ENCODE measurements at regions of chr12 and their contacts with region 1.

Region 1: GRCh38 chr12:50174971-50175715 is 8.0 kb upstream of the CERS5 start:
- DNase-seq: no peak
- ATAC-seq: no peak
- H3K4me3 Mint-ChIP-seq: no peak overlapping the region
- H3K27ac Mint-ChIP-seq: no peak overlapping the region
- H3K4me1 Mint-ChIP-seq: no peaks in the 10 kb centered on the region
- H3K27me3 Mint-ChIP-seq: no peaks in the 10 kb centered on the region

Region 2: DNA sequence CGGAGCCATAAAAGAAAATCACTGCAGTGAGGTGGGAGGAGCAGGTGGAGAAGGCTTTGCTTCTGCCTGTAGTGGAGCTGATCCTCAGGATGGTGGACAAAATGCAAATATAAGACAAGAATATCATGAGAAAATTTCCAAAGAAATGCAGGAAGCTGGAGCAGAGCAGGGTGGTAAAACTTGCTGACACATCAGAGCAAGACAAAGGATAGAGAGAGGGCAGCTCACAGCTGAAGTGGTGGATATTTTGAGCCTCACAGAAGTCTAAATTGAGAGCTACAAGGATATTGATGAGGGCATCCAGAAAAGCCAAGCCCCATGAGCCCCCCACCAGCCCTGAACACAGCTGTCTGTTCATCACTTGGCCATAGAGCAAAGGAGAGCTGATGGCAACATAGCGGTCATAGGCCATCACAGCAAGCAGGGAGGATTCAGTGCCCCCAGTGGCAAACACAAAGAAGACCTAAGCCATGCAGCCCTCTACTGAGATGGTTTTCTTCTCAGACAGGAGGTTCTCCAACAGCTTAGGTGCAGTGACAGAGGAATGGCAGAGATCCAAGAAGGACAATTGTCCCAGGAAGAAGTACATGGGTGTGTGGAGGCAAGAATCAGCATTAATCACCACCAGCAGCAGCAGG is 1732.8 kb before region 1 on chr12:
- CTCF ChIA-PET with region 1: no interaction called
- POLR2A ChIA-PET with region 1: no interaction called
- intact Hi-C with region 1: no loop called
- DNase-seq: no peak
- ATAC-seq: no peak
- H3K4me3 Mint-ChIP-seq: no peak overlapping the region
- H3K27ac Mint-ChIP-seq: no peak overlapping the region
- H3K4me1 Mint-ChIP-seq: peaks cover 12% of the 10 kb centered on the region
- H3K27me3 Mint-ChIP-seq: no peaks in the 10 kb centered on the region

Region 3: GRCh38 chr12:50084775-50085614 is 90.1 kb before region 1 on chr12 and contains the start of gene SMARCD1:
- CTCF ChIA-PET with region 1: interaction called, 11 read pairs
- POLR2A ChIA-PET with region 1: no interaction called
- intact Hi-C with region 1: loop called (anchors 1 kb)
- DNase-seq: peak; percentile 91
- ATAC-seq: peak; percentile 90
- H3K4me3 Mint-ChIP-seq: peak within 1 kb of the TSS; percentile 85
- H3K27ac Mint-ChIP-seq: peak within 1 kb of the TSS; percentile 96
- H3K4me1 Mint-ChIP-seq: peaks cover 36% of the 10 kb centered on the region
- H3K27me3 Mint-ChIP-seq: no peaks in the 10 kb centered on the region
- total RNA-seq, gene SMARCD1: 51.8 to 76.6 TPM

Region 4: DNA sequence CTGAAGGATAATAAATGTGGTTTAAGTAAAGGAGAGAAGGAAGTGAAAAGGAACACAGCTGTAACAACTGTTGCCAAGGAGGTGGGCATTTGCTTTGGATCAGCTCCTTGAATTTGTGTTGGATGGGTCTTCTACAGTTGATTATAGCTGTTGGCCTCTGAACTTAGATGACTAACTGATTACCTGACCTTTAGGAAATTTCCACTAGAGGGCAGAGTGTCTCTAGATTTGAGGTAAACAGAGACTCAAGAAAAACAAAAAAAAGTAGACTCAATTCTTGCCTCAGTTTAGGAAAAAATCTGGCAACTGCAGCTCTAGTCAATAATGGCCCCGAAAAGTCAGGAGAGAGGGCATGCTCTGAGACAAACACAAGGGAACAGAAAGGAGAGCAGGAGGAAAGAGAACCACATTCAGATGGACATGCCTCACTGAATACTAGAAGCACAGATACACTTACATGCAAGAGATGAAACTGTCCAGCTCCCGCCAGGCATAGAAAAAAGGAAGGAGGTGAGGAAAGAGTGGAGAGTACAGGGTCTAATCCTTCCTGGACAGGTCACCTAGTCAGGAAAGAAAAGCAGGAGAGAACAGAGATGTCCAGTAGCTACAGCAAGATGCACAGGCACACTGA is 42.5 kb before region 1 on chr12:
- CTCF ChIA-PET with region 1: interaction called, 43 read pairs
- POLR2A ChIA-PET with region 1: no interaction called
- intact Hi-C with region 1: loop called (anchors 1 kb)
- DNase-seq: no peak
- ATAC-seq: peak; percentile 71
- H3K4me3 Mint-ChIP-seq: no peak overlapping the region
- H3K27ac Mint-ChIP-seq: peak overlapping the region; percentile 74
- H3K4me1 Mint-ChIP-seq: peaks cover 6% of the 10 kb centered on the region
- H3K27me3 Mint-ChIP-seq: no peaks in the 10 kb centered on the region

Region 5: DNA sequence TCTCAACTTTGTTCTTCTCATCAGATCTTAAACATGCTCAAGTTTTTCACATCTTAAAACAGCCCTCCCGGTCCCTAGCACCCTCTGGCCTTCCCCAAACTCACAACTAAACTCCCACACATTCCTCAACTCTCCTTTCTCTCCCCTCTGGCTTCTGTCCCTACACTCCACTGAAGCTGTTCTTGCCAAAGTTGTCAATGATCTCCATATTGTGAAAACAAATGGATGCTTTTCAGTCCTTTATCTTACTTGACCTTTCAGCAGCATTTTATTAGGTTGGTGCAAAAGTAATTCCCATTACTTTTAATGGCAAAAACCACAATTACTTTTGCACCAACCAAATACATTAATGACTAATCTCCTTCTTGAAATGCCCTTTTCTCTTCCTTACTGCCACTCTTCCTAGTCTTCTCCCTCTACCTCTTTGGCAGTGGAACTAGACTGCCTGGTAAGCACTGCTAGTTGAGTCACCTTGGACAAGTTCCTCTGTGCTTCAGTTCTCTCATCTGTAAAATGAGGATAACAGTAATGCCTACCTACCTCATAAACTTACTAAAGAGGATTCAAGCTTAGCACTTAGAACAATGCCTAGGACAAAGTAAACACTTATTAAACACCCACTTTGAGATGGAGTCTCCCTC is 24.0 kb before region 1 on chr12:
- CTCF ChIA-PET with region 1: interaction called, 20 read pairs
- POLR2A ChIA-PET with region 1: interaction called, 3 read pairs
- intact Hi-C with region 1: no loop called
- DNase-seq: no peak
- ATAC-seq: peak; percentile 38
- H3K4me3 Mint-ChIP-seq: no peak overlapping the region
- H3K27ac Mint-ChIP-seq: peak overlapping the region; percentile 22
- H3K4me1 Mint-ChIP-seq: peaks cover 25% of the 10 kb centered on the region
- H3K27me3 Mint-ChIP-seq: no peaks in the 10 kb centered on the region

Measured in activated CD4-positive, alpha-beta T cell treated with anti-CD3 and anti-CD28 coated beads for 36 hours (primary cell).